Naive thymus-derived CD4-positive, alpha-beta T cell (primary cell): ENCODE measurements at regions of chr5 and their contacts with region 1.

Region 1: GRCh38 chr5:137978659-137979058 is 54.2 kb downstream of the FAM13B start:
- DNase-seq: no peak
- ATAC-seq: no peak
- H3K4me3 ChIP-seq: no peak overlapping the region
- H3K4me3 Mint-ChIP-seq: no peak overlapping the region
- H3K27ac ChIP-seq: no peak overlapping the region
- H3K27ac Mint-ChIP-seq: peak overlapping the region in 3 of 9 donors; percentile 2 to 67 (median 4)
- H3K4me1 ChIP-seq: no peaks in the 10 kb centered on the region
- H3K4me1 Mint-ChIP-seq: peaks cover 0 to 17% (median 0%) of the 10 kb centered on the region in 7 donors
- H3K27me3 ChIP-seq: no peaks in the 10 kb centered on the region
- H3K27me3 Mint-ChIP-seq: no peaks in the 10 kb centered on the region

Region 2: DNA sequence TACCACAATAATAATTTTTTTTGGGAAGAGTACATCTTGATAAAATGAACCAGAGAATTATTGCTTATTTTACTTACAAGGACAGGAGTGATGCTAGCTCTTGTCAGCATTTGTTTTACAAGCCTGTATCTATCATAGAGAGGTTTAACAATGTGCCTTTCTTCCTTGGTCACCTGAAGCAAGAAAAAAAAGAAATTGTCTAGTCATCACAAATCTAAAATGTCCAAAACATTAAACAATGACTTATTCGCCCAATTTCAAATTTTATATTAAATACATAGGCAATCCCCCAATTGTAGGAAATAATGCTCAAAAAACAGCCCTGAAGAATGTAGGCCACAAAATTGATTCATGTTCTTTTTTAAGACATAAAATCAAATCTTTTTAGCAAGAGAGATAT is 32.8 kb before region 1 on chr5:
- CTCF ChIA-PET with region 1: no interaction called
- POLR2A ChIA-PET with region 1: no interaction called
- intact Hi-C with region 1: no loop called
- DNase-seq: no peak
- ATAC-seq: no peak
- H3K4me3 ChIP-seq: no peak overlapping the region
- H3K4me3 Mint-ChIP-seq: no peak overlapping the region
- H3K27ac ChIP-seq: no peak overlapping the region
- H3K27ac Mint-ChIP-seq: peak overlapping the region in 1 of 9 donors; percentile 31
- H3K4me1 ChIP-seq: no peaks in the 10 kb centered on the region
- H3K4me1 Mint-ChIP-seq: peaks cover 0 to 5% (median 0%) of the 10 kb centered on the region in 7 donors
- H3K27me3 ChIP-seq: no peaks in the 10 kb centered on the region
- H3K27me3 Mint-ChIP-seq: no peaks in the 10 kb centered on the region

Region 3: DNA sequence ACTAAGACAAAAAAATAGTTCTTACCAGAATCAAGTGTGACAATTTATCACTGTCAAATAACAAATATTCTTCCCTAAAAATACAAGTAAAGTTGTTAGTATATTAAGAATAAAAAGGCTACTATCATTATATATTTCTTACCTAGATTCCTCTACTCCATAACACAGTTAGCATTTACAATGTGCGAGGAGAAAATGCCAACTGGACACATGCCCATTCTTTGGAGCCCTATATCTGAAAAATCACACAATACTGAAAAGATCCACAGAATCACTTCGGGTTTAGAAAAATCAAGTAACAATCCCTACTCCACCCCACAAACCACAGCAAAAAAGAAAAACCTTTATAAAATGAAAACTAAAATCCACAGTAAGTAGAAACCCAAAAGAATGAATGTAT is 18.5 kb before region 1 on chr5:
- CTCF ChIA-PET with region 1: no interaction called
- POLR2A ChIA-PET with region 1: no interaction called
- intact Hi-C with region 1: loop called in 1 of 2 experiments (anchors 2 kb)
- DNase-seq: no peak
- ATAC-seq: no peak
- H3K4me3 ChIP-seq: no peak overlapping the region
- H3K4me3 Mint-ChIP-seq: no peak overlapping the region
- H3K27ac ChIP-seq: no peak overlapping the region
- H3K27ac Mint-ChIP-seq: peak overlapping the region in 2 of 9 donors; percentile 18 to 69
- H3K4me1 ChIP-seq: no peaks in the 10 kb centered on the region
- H3K4me1 Mint-ChIP-seq: peaks cover 0 to 6% (median 5%) of the 10 kb centered on the region in 7 donors
- H3K27me3 ChIP-seq: no peaks in the 10 kb centered on the region
- H3K27me3 Mint-ChIP-seq: no peaks in the 10 kb centered on the region

Region 4: GRCh38 chr5:138213161-138214029 is 234.7 kb after region 1 on chr5 and contains the start of gene CDC23:
- CTCF ChIA-PET with region 1: no interaction called
- POLR2A ChIA-PET with region 1: no interaction called
- intact Hi-C with region 1: no loop called
- DNase-seq: peak; percentile 65 to 95 (median 92)
- ATAC-seq: peak; percentile 98
- H3K4me3 ChIP-seq: peak within 1 kb of the TSS; percentile 97
- H3K4me3 Mint-ChIP-seq: peak within 1 kb of the TSS; percentile 92 to 99 (median 98)
- H3K27ac ChIP-seq: peak within 1 kb of the TSS; percentile 91
- H3K27ac Mint-ChIP-seq: peak within 1 kb of the TSS; percentile 95 to 98 (median 96)
- H3K4me1 ChIP-seq: peaks cover 0 to 8% of the 10 kb centered on the region in 2 donors
- H3K4me1 Mint-ChIP-seq: peaks cover 14 to 32% (median 27%) of the 10 kb centered on the region in 7 donors
- H3K27me3 ChIP-seq: no peaks in the 10 kb centered on the region
- H3K27me3 Mint-ChIP-seq: no peaks in the 10 kb centered on the region
- total RNA-seq, gene CDC23: 13.0 to 39.6 (median 25.5) TPM

Region 5: GRCh38 chr5:139903795-139904565 is 1925.3 kb after region 1 on chr5:
- CTCF ChIA-PET with region 1: no interaction called
- POLR2A ChIA-PET with region 1: no interaction called
- intact Hi-C with region 1: no loop called
- DNase-seq: no peak
- ATAC-seq: peak; percentile 37
- H3K4me3 ChIP-seq: no peak overlapping the region
- H3K4me3 Mint-ChIP-seq: peak overlapping the region in 8 of 10 donors; percentile 39 to 74 (median 64)
- H3K27ac ChIP-seq: no peak overlapping the region
- H3K27ac Mint-ChIP-seq: no peak overlapping the region
- H3K4me1 ChIP-seq: no peaks in the 10 kb centered on the region
- H3K4me1 Mint-ChIP-seq: peaks cover 0 to 7% (median 5%) of the 10 kb centered on the region in 7 donors
- H3K27me3 ChIP-seq: peaks cover 0 to 4% of the 10 kb centered on the region in 2 donors
- H3K27me3 Mint-ChIP-seq: peaks cover 24 to 35% (median 30%) of the 10 kb centered on the region in 5 donors